CD4-positive, alpha-beta T cell (primary cell): ENCODE measurements at regions of chr2 and their contacts with region 1.

Region 1: GRCh38 chr2:236745420-236746197 is 176.0 kb downstream of the ACKR3 start:
- DNase-seq: no peak
- ATAC-seq: no peak
- H3K4me3 ChIP-seq: no peak overlapping the region
- H3K4me3 Mint-ChIP-seq: no peak overlapping the region
- H3K27ac ChIP-seq: no peak overlapping the region
- H3K27ac Mint-ChIP-seq: no peak overlapping the region
- H3K4me1 ChIP-seq: no peaks in the 10 kb centered on the region
- H3K4me1 Mint-ChIP-seq: no peaks in the 10 kb centered on the region
- H3K27me3 ChIP-seq: peaks cover 0 to 2% of the 10 kb centered on the region in 2 experiments
- H3K27me3 Mint-ChIP-seq: peaks cover 21% of the 10 kb centered on the region
- CTCF ChIP-seq: no peak

Region 2: GRCh38 chr2:236774171-236774570 is 28.6 kb after region 1 on chr2:
- CTCF ChIA-PET with region 1: no interaction called
- POLR2A ChIA-PET with region 1: no interaction called
- intact Hi-C with region 1: loop called in 1 of 2 experiments (anchors 1 kb)
- DNase-seq: no peak
- ATAC-seq: no peak
- H3K4me3 ChIP-seq: no peak overlapping the region
- H3K4me3 Mint-ChIP-seq: no peak overlapping the region
- H3K27ac ChIP-seq: no peak overlapping the region
- H3K27ac Mint-ChIP-seq: no peak overlapping the region
- H3K4me1 ChIP-seq: no peaks in the 10 kb centered on the region
- H3K4me1 Mint-ChIP-seq: no peaks in the 10 kb centered on the region
- H3K27me3 ChIP-seq: peaks cover 0 to 2% of the 10 kb centered on the region in 2 experiments
- H3K27me3 Mint-ChIP-seq: peaks cover 2% of the 10 kb centered on the region
- CTCF ChIP-seq: no peak